Natural killer cell (primary cell): ENCODE measurements at regions of chr10 and their contacts with region 1.

Region 1: GRCh38 chr10:87094373-87095235 is at the starts of genes GLUD1 and SHLD2:
- DNase-seq: peak; percentile 88 to 94
- ATAC-seq: peak; percentile 62 to 83 (median 71)
- H3K4me3 ChIP-seq: peak within 1 kb of the TSS; percentile 69
- H3K4me3 Mint-ChIP-seq: peak within 1 kb of the TSS; percentile 92
- H3K27ac ChIP-seq: peak within 1 kb of the TSS; percentile 94
- H3K27ac Mint-ChIP-seq: peak within 1 kb of the TSS; percentile 85 to 92
- H3K4me1 ChIP-seq: peaks cover 18% of the 10 kb centered on the region
- H3K4me1 Mint-ChIP-seq: peaks cover 41 to 44% of the 10 kb centered on the region in 2 donors
- H3K27me3 ChIP-seq: no peaks in the 10 kb centered on the region
- H3K27me3 Mint-ChIP-seq: no peaks in the 10 kb centered on the region
- CTCF ChIP-seq: no peak
- total RNA-seq, gene GLUD1: 102 to 115 (median 112) TPM
- total RNA-seq, gene SHLD2: 32.6 to 37.5 (median 34.1) TPM

Region 2: GRCh38 chr10:86945361-86946212 is 149.0 kb before region 1 on chr10:
- intact Hi-C with region 1: no loop called
- DNase-seq: no peak
- ATAC-seq: no peak
- H3K4me3 ChIP-seq: no peak overlapping the region
- H3K4me3 Mint-ChIP-seq: no peak overlapping the region
- H3K27ac ChIP-seq: no peak overlapping the region
- H3K27ac Mint-ChIP-seq: no peak overlapping the region
- H3K4me1 ChIP-seq: no peaks in the 10 kb centered on the region
- H3K4me1 Mint-ChIP-seq: peaks cover 0 to 5% of the 10 kb centered on the region in 2 donors
- H3K27me3 ChIP-seq: no peaks in the 10 kb centered on the region
- H3K27me3 Mint-ChIP-seq: peaks cover 0 to 7% of the 10 kb centered on the region in 2 donors
- CTCF ChIP-seq: no peak

Region 3: GRCh38 chr10:86971232-86971991 is 123.2 kb before region 1 on chr10:
- intact Hi-C with region 1: loop called (anchors 1 kb)
- DNase-seq: peak; percentile 85 to 94
- ATAC-seq: peak; percentile 87 to 92 (median 88)
- H3K4me3 ChIP-seq: peak overlapping the region; percentile 60
- H3K4me3 Mint-ChIP-seq: peak overlapping the region; percentile 90
- H3K27ac ChIP-seq: peak overlapping the region; percentile 80
- H3K27ac Mint-ChIP-seq: peak overlapping the region; percentile 81 to 93
- H3K4me1 ChIP-seq: peaks cover 46% of the 10 kb centered on the region
- H3K4me1 Mint-ChIP-seq: peaks cover 7 to 33% of the 10 kb centered on the region in 2 donors
- H3K27me3 ChIP-seq: no peaks in the 10 kb centered on the region
- H3K27me3 Mint-ChIP-seq: peaks cover 0 to 7% of the 10 kb centered on the region in 2 donors
- CTCF ChIP-seq: no peak

Region 4: DNA sequence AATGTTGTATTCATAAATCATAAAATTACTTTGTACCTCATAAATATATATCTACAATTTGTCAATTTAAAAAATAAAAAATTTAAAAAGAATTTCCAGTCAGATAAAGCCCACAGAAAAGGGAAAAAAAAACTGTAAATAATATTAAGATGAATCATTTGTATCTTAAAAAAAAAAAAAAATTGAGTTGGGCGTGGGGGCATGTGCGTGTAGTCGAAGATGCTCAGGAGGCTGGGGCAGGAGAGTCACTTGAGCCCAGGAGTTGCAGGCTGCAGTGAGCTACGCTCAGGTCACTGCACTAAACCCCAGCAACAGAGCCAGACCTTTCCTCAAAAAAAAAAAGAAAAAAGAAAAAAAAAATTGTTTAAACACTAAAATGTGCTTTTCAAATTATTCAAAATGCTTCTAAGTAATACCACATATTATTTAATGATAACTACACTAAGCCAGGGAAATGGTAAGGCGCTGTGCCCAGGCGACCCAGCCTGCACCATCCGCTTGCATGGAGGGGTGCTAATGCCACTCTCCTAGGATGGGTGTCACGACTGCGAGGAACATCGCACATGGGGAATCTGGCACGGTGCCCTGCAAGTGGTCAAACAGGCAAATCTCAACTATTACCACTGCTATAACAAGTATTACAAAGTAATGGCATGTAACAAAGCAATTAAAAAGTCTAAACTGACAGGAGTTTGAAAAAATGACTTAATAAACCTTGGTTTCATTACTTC is 15.3 kb before region 1 on chr10:
- intact Hi-C with region 1: loop called (anchors 1 kb)
- DNase-seq: no peak
- ATAC-seq: no peak
- H3K4me3 ChIP-seq: no peak overlapping the region
- H3K4me3 Mint-ChIP-seq: no peak overlapping the region
- H3K27ac ChIP-seq: no peak overlapping the region
- H3K27ac Mint-ChIP-seq: no peak overlapping the region
- H3K4me1 ChIP-seq: peaks cover 8% of the 10 kb centered on the region
- H3K4me1 Mint-ChIP-seq: peaks cover 39 to 43% of the 10 kb centered on the region in 2 donors
- H3K27me3 ChIP-seq: no peaks in the 10 kb centered on the region
- H3K27me3 Mint-ChIP-seq: no peaks in the 10 kb centered on the region
- CTCF ChIP-seq: no peak